ENCODE measurements at regions of chr11 and their contacts with region 1.

Region 1: DNA sequence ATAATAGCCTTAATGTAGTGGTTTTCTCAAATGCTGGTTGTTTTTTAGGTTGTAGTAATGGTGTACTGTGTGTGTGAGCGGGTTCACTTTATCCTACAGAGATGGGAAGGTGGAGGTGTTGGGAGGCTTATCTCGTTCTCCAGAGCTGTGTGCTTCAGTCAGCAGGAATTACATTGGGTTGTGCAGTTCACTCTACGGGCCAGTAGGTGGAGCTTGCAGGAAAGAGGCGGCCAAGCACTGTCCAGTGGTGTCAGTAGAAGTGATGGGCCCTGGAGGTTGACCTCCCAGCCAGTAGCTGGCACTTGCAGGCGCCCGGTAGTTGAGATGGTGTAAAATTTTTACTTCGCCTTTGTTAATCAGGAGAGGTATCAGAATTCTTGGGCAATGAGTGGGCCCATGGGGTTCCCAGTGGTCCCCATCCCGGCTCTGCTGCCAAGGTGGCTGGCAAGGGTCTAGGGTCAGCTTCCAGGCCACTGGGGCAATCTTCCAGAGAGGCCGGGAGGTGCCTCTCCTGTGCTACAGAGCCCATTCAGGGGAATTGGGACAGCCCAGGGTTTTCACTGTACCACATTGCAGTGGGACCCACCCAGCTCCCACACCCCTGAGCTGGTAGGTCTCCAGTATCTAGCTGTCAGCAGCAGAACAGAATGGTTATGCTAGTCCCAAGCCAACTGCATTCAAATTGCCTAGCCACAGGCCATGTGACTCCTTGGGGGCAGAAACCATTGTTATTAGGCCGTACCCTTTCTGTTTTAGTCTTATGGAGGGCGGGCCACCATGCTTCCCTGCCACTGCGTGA is 43.9 kb downstream of the BIRC2 start:
- DNase-seq: peak; percentile 68
- ATAC-seq: peak; percentile 80
- H3K4me3 Mint-ChIP-seq: no peak overlapping the region
- H3K27ac Mint-ChIP-seq: peak overlapping the region; percentile 39
- H3K4me1 Mint-ChIP-seq: peaks cover 43% of the 10 kb centered on the region
- H3K27me3 Mint-ChIP-seq: no peaks in the 10 kb centered on the region
- CTCF ChIP-seq: peak; percentile 88

Region 2: DNA sequence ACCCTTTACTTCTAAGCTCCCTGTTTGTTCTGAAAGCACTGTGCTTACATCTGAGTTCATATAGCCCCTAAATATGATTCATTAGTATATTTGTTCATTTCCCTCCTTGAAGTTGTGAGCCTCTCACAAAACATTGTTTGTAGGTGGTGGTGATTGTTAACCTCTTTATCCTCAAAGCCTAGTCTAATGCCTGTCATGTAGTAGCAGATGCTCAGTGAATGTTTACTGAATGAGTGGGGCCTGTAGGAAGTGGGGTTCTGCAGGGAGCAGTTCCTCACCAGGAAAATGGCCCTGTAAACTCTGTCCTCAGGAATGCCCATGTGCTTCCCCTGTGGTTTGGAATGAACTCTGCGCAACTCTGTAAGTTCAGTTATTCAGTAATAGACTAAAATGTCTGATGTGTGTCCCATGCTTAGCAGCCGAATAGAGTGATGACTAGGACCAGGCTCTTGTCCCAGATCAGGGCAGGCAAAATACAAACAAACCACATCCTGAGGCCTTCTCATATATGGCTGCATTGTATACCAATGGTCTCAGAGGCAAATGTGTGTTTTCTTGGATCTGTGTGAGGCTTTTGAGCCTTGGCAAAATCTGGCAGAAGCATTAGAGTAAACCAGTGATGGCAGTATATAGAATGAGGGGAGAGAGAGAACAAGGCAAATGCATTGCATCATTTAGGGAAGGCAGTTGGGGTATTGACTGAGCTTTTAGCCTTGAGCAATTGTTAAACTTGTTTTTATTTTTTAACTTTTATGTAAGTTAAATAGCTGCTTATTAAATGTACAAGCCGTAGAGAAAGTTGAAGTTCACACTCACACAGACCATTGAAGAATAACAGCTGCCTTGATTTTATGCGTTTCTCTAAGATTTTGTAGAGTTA is 164.9 kb before region 1 on chr11:
- CTCF ChIA-PET with region 1: no interaction called
- POLR2A ChIA-PET with region 1: no interaction called
- intact Hi-C with region 1: no loop called
- DNase-seq: no peak
- ATAC-seq: no peak
- H3K4me3 Mint-ChIP-seq: no peak overlapping the region
- H3K27ac Mint-ChIP-seq: no peak overlapping the region
- H3K4me1 Mint-ChIP-seq: no peaks in the 10 kb centered on the region
- H3K27me3 Mint-ChIP-seq: peaks cover 2% of the 10 kb centered on the region
- CTCF ChIP-seq: no peak

Region 3: GRCh38 chr11:102346748-102347461 is 44.0 kb before region 1 on chr11 and contains the start of gene BIRC2:
- CTCF ChIA-PET with region 1: interaction called, 23 read pairs
- POLR2A ChIA-PET with region 1: interaction called, 3 read pairs
- intact Hi-C with region 1: no loop called
- DNase-seq: peak; percentile 95
- ATAC-seq: peak; percentile 94
- H3K4me3 Mint-ChIP-seq: peak within 1 kb of the TSS; percentile 90
- H3K27ac Mint-ChIP-seq: peak within 1 kb of the TSS; percentile 95
- H3K4me1 Mint-ChIP-seq: peaks cover 36% of the 10 kb centered on the region
- H3K27me3 Mint-ChIP-seq: no peaks in the 10 kb centered on the region
- CTCF ChIP-seq: peak; percentile 69
- total RNA-seq, gene BIRC2: 29.8 to 32.9 TPM

Region 4: DNA sequence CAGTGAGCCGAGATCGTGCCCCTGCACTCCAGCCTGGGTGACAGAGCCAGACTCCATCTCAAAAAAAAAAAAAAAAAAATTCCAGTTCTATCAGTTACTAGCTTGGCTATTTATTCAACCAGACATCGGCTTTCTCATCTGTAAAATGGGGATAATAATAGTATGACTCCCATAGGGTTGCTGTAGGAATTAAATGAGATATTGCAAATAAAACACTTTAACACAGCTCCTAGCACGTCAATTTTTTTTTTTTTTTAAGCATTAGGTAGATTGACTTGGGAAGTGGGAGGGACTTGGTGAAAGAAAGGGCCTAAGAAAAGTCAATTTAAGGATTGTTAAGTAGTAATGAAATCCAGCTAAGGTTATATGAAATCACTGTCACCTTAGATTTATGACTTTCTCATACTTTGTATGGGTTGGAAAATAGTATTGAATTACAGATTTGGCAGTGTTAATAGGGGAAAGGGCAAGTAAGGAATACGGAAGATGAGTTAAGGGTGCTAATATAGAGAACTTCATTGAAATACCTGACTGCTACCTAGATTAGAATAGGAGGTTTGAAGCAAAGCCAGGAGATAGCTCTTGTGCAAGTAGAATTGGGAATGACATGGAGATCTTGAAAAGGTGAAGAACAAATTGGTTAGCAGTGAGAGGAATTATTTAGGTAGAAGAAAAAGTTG is 15.0 kb before region 1 on chr11:
- CTCF ChIA-PET with region 1: interaction called, 59 read pairs
- POLR2A ChIA-PET with region 1: interaction called, 3 read pairs
- intact Hi-C with region 1: no loop called
- DNase-seq: no peak
- ATAC-seq: no peak
- H3K4me3 Mint-ChIP-seq: no peak overlapping the region
- H3K27ac Mint-ChIP-seq: no peak overlapping the region
- H3K4me1 Mint-ChIP-seq: peaks cover 30% of the 10 kb centered on the region
- H3K27me3 Mint-ChIP-seq: no peaks in the 10 kb centered on the region
- CTCF ChIP-seq: no peak

Region 5: GRCh38 chr11:102430158-102430836 is 39.4 kb after region 1 on chr11:
- CTCF ChIA-PET with region 1: interaction called, 18 read pairs
- POLR2A ChIA-PET with region 1: interaction called, 3 read pairs
- intact Hi-C with region 1: no loop called
- DNase-seq: peak; percentile 48
- ATAC-seq: peak; percentile 78
- H3K4me3 Mint-ChIP-seq: no peak overlapping the region
- H3K27ac Mint-ChIP-seq: peak overlapping the region; percentile 85
- H3K4me1 Mint-ChIP-seq: peaks cover 76% of the 10 kb centered on the region
- H3K27me3 Mint-ChIP-seq: no peaks in the 10 kb centered on the region
- CTCF ChIP-seq: no peak

Region 6: GRCh38 chr11:102488208-102488607 is 97.3 kb after region 1 on chr11:
- CTCF ChIA-PET with region 1: interaction called, 15 read pairs
- POLR2A ChIA-PET with region 1: interaction called, 4 read pairs
- intact Hi-C with region 1: no loop called
- DNase-seq: peak; percentile 26
- ATAC-seq: peak; percentile 69
- H3K4me3 Mint-ChIP-seq: no peak overlapping the region
- H3K27ac Mint-ChIP-seq: peak overlapping the region; percentile 59
- H3K4me1 Mint-ChIP-seq: peaks cover 40% of the 10 kb centered on the region
- H3K27me3 Mint-ChIP-seq: no peaks in the 10 kb centered on the region
- CTCF ChIP-seq: no peak